ENCODE measurements at regions of chr17 and their contacts with region 1.

Region 1: GRCh38 chr17:58317421-58318064 is 11.1 kb downstream of the TSPOAP1 start:
- DNase-seq: peak; percentile 43
- H3K4me3 ChIP-seq: no peak overlapping the region
- H3K27ac ChIP-seq: no peak overlapping the region
- H3K27me3 ChIP-seq: no peaks in the 10 kb centered on the region
- CTCF ChIP-seq: peak; percentile 94

Region 2: GRCh38 chr17:57588074-57588473 is 729.5 kb before region 1 on chr17:
- CTCF ChIA-PET with region 1: no interaction called
- POLR2A ChIA-PET with region 1: no interaction called
- DNase-seq: no peak
- H3K4me3 ChIP-seq: no peak overlapping the region
- H3K27ac ChIP-seq: no peak overlapping the region
- H3K27me3 ChIP-seq: no peaks in the 10 kb centered on the region
- CTCF ChIP-seq: no peak

Region 3: DNA sequence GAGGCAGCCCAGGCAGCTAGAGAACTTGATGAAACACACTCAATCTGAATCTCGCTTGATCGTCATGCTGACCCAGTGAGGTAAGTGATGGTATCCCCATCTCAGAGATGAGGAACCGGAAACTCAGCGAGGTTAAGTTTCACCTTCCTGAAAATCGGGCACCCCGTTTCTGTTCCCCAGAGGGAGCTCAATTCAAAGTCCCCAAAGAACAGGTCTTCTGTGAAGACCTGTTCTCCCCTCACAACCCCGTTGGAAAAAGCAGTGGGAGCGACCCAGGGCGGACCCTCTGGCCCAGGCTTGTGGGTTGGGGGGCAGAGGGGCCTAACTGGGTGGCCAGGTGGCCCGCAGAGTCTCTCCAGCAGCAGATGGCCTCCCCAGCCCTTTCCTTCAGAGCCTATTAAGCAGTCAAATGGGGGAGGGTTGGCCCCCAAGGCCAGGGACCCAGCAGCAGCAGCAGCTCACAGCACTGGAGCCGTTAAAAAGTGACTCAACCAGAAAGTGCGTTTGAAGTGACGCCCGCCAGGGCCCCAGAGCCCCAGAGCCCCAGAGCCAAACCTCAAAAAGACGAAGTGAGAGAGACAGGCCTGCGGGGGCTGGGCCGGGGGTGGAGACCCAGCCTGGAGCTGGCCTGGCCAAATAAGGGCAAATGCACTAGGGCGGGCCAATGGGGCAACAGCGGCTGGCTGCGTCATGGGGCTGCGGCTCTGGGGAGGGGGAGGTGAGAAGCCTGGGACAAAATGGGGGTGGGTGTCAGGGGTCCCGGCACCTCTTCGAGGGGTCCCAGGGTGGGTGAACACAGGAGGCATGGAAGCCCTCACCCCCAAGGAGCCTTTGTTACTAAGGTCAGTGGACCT is 20.3 kb after region 1 on chr17:
- CTCF ChIA-PET with region 1: interaction called, 13 read pairs
- POLR2A ChIA-PET with region 1: interaction called, 13 read pairs
- DNase-seq: peak; percentile 88
- H3K4me3 ChIP-seq: no peak overlapping the region
- H3K27ac ChIP-seq: peak overlapping the region; percentile 100
- H3K27me3 ChIP-seq: no peaks in the 10 kb centered on the region
- CTCF ChIP-seq: no peak

Region 4: GRCh38 chr17:58394534-58395223 is 77.1 kb after region 1 on chr17:
- CTCF ChIA-PET with region 1: interaction called, 11 read pairs
- POLR2A ChIA-PET with region 1: no interaction called
- DNase-seq: no peak
- H3K4me3 ChIP-seq: no peak overlapping the region
- H3K27ac ChIP-seq: peak overlapping the region; percentile 13
- H3K27me3 ChIP-seq: peaks cover 9% of the 10 kb centered on the region
- CTCF ChIP-seq: no peak

Region 5: DNA sequence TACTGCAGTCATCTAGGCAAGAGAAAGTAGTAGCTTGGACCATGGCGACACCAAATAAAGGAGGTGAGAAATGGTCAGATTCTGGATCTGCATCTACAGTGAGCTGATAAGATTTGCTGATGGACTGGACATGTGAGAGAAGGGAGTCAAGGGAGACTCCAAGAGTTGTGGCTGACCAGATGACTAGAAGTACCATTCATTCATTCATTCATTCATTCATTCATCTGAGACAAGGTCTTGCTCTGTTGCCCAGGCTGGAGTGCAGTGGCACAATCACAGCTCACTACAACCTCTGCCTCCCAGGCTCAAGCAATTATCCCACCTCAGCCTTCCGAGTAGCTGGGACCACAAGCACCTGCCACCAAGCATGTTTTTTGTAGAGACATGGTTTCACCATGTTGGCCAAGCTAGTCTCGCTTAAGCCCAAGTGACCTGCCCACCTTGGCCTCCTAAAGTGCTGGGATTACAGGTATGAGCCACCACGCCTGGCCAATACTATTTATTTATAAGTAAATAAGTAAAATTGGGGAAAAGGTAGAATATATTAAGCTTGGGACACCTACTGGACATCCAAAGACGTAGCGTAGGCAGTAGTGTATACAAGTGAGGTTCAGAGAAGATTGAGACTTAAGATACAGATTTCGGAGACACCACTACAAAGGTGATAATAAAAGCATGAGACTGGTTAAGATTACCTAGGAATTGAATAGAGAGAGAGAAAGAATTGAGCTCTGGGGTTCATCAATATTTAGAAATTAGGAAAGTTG is 115.4 kb after region 1 on chr17:
- CTCF ChIA-PET with region 1: interaction called, 14 read pairs
- POLR2A ChIA-PET with region 1: no interaction called
- DNase-seq: no peak
- H3K4me3 ChIP-seq: no peak overlapping the region
- H3K27ac ChIP-seq: no peak overlapping the region
- H3K27me3 ChIP-seq: no peaks in the 10 kb centered on the region
- CTCF ChIP-seq: no peak